SK-N-SH (cell line): ENCODE measurements at regions of chr6 and their contacts with region 1.

Region 1: DNA sequence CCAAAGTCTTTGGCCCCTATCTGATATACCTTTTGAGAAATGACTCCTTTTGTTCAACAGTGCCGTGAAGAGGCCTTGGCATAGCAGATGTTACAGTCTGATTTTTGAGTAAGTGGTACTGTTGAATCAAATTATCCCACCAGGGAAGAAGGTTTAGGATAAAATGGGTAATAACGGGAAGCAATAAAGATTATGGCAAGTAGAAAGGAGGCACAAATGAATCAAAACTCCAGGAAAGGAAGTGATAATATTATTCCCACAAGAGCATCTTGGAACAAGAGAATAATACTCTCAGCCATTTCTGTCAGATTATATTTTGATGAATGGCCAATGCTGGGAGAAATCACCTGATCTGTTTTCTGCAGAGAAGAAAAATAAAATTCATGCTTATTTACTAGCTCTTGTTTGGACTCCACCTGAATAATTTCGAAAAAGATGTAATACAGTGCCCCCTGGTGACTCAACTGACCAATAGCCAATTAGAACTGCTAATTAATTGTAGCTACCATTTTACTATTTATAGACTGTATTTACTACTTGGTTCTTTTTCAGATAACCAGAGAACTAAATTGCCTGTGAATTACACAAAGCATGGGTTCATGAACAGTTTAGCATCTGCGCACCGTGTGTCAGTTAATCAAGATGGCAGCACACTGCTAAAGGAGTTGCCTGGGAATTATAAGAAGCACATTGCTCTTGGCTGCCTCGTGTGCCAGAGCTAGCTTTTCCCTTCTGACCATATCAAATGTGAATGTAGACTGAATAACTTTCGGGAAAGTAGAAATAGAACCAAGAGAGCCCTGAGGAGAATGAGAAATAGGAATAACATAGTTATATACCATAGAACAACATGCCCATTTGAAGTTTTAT is 78.5 kb upstream of the TRDN start:
- DNase-seq: peak; percentile 10
- H3K4me3 ChIP-seq: no peak overlapping the region
- H3K27ac ChIP-seq: no peak overlapping the region
- H3K4me1 ChIP-seq: peaks cover 0 to 4% of the 10 kb centered on the region in 2 experiments; a peak in 1 of 4 replicates
- H3K27me3 ChIP-seq: no peaks in the 10 kb centered on the region
- CTCF ChIP-seq: peak; percentile 74
- EP300 ChIP-seq: no peak
- RAD21 ChIP-seq: peak; percentile 66

Region 2: DNA sequence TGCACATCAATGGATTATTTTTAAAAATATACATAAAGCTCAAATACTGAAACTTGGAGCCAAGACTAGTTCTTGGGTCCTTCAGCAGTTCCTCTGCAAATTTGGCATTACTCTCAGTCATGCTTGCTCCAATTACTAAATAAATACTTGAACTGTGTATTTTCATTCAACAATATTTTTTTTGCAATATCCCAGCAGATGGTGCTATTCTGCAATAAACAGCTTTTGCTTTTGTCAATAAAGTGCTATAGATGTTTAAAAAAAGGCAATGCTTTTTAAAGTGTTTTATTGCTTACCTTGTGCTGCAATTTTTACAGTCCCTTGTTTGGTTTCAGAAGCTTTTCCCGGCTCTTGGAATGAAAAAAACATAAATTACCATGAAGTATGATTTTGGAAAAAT is 321.9 kb before region 1 on chr6:
- CTCF ChIA-PET with region 1: interaction called, 11 read pairs
- POLR2A ChIA-PET with region 1: no interaction called
- DNase-seq: no peak
- H3K4me3 ChIP-seq: no peak overlapping the region
- H3K27ac ChIP-seq: no peak overlapping the region
- H3K4me1 ChIP-seq: no peaks in the 10 kb centered on the region
- H3K27me3 ChIP-seq: peaks cover 6% of the 10 kb centered on the region; the same call in 1 of the 2 replicates
- CTCF ChIP-seq: peak; percentile 49
- EP300 ChIP-seq: no peak
- RAD21 ChIP-seq: peak; percentile 52

Region 3: DNA sequence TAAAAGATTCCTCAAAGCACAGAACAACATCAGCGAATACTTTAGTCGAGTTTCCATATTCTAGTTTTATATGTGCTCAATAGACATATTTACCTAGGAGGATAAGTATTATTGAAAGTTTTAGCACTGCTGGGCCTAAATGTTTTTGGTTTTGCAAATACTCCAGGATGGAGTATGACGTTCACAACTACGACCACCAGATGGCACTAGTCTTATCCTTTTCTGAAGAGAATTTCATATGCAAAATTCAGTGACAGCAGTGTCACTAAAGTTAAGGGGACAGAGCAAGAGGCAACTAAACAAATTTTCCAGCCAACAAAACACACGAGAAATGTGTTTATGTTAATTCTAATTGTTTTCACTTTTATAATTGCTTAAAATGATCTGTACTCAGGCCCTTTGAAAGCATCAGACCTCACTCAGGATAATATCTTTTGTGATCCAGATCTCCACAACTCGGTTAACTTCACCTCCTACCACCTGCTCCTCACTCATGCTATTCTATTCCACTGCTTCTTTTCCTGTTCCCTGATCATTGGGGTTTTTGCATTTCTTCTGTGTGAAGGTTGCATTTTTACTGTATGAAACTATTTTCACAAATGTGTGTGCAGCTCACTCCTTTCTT is 299.3 kb before region 1 on chr6:
- CTCF ChIA-PET with region 1: interaction called, 19 read pairs
- POLR2A ChIA-PET with region 1: interaction called, 3 read pairs
- DNase-seq: peak; percentile 12
- H3K4me3 ChIP-seq: no peak overlapping the region; a peak in 1 of 4 replicates
- H3K27ac ChIP-seq: no peak overlapping the region
- H3K4me1 ChIP-seq: no peaks in the 10 kb centered on the region
- H3K27me3 ChIP-seq: no peaks in the 10 kb centered on the region; the same call in 1 of the 2 replicates
- CTCF ChIP-seq: peak; percentile 80
- EP300 ChIP-seq: no peak
- RAD21 ChIP-seq: peak; percentile 65

Region 4: DNA sequence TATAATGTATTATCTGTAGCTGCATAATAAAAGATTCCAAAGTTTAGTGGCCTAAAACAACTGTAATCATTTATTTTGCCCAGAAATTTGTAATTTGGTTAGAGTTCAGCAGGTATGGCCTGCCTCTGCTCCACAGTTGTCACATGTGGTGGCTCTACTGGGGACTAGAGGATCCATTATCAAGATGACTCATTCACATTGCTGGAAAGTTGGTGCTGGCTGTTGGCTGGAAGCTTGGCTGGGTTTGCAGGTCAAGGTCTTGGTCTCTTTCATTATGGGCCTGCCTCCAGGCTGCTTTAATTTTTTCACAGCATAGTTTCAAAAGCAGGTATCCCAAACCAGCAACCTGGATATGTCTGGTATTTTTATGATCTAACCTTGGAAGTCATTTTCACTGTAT is 96.1 kb before region 1 on chr6:
- CTCF ChIA-PET with region 1: no interaction called
- POLR2A ChIA-PET with region 1: no interaction called
- DNase-seq: no peak
- H3K4me3 ChIP-seq: no peak overlapping the region; a peak in 1 of 4 replicates
- H3K27ac ChIP-seq: no peak overlapping the region
- H3K4me1 ChIP-seq: no peaks in the 10 kb centered on the region
- H3K27me3 ChIP-seq: no peaks in the 10 kb centered on the region
- CTCF ChIP-seq: no peak
- EP300 ChIP-seq: no peak
- RAD21 ChIP-seq: no peak

Region 5: DNA sequence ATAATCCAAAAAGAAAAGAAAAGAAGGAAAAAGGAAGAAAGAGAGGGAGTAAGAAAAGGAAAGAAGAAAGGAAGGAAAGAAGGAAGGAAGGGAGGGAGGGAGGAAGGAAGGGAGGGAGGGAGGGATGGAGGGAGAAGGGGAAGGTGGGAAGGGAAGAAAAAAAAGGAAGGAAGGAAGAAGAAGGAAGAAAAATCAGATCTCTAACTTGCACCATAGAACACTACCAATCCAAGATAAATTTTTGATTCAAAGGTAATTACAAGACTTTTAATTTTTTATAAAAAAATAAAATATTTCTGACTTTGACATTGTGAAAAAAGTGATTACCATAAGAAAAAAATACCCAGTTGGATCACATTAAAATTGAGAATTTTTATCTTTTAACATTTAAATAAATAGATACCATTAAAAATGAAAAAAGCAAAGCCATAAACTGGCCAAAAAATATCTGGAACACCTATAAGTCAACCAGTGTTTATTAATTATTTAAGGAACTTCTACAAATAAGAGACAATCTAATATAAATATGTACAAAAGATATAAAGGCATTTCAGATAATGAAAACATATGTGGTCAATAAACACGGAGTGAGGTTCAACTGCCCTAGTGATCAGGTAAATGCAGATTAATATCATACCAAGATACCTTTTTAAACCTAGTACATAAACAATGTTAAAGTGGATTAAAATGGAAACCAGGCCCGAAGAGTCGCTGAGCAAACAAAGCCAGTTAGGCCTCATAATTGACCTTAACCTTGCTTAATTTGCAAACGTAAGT is 18.1 kb after region 1 on chr6:
- CTCF ChIA-PET with region 1: interaction called, 13 read pairs
- POLR2A ChIA-PET with region 1: no interaction called
- DNase-seq: no peak
- H3K4me3 ChIP-seq: no peak overlapping the region
- H3K27ac ChIP-seq: no peak overlapping the region
- H3K4me1 ChIP-seq: no peaks in the 10 kb centered on the region
- H3K27me3 ChIP-seq: no peaks in the 10 kb centered on the region
- CTCF ChIP-seq: no peak
- EP300 ChIP-seq: no peak
- RAD21 ChIP-seq: no peak